HepG2 (cell line): ENCODE measurements at regions of chr2 and their contacts with region 1.

Region 1: DNA sequence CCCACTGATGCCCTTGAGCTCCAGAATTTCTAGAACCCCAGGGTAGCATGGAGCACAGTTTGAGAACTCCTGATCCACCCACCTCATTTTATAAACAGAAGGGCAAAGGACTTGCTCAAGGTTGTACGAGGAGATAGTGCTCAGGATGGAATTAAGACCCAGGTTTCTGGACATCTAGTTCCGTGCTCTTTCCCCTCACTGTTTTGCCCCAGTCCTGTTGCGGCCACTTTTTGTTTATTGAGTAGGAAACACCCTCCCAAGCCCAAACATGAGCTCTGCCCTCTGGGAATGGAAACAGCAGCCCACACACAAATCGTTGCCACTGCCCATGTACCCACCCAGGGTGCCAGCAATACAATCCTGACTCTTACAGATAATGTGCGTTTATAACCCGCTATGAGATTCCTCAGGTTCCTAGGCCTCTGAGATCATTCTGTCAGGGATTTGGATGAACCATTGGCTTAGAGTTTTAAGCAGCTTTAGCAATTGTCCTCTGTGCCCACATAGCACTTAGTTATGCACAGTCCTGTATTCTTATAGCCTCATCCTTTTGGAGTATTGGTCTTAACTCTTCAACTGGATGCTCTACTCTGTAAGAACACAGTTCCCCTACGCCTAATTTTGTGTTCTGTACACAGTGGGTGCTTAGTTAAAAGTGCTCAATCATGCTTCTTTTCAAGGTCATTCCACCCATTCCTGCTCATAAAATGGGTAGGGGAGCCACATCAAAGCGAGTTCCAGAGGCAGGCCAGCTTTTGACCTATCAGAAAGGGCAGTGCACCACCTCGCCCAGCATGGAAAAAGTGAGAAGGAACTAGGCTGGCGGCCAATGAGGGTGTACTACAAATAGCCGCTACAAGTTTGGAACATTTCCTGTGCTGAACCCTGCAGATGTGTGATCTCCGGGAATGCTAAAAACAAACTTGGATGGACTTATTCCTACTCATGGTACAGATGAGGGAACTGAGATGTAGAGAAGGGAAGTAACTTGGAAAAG is 60.3 kb upstream of the IGFBP2 start:
- DNase-seq: peak; percentile 78
- ATAC-seq: peak; percentile 66
- H3K4me3 ChIP-seq: peak overlapping the region; percentile 4 to 58 (median 7); a peak in 4 of 6 replicates
- H3K27ac ChIP-seq: peak overlapping the region; percentile 74
- H3K4me1 ChIP-seq: peaks cover 79% of the 10 kb centered on the region
- H3K27me3 ChIP-seq: no peaks in the 10 kb centered on the region; a peak in 1 of 5 replicates
- CTCF ChIP-seq: no peak
- EP300 ChIP-seq: 0 out of 4 replicates have a peak, but pooled peaks of 1 of the 2 experiments have one; percentile 62
- POLR2A ChIP-seq: peak in 1 of 2 experiments; percentile 36; a peak in 1 of 4 replicates
- RAD21 ChIP-seq: no peak

Region 2: GRCh38 chr2:216519154-216519762 is 53.6 kb before region 1 on chr2:
- CTCF ChIA-PET with region 1: interaction called, 3 read pairs
- POLR2A ChIA-PET with region 1: interaction called, 8 read pairs
- in situ Hi-C with region 1: no loop called
- intact Hi-C with region 1: loop called (anchors 2 kb)
- DNase-seq: peak; percentile 82
- ATAC-seq: peak; percentile 84
- H3K4me3 ChIP-seq: no peak overlapping the region
- H3K27ac ChIP-seq: no peak overlapping the region
- H3K4me1 ChIP-seq: peaks cover 28% of the 10 kb centered on the region
- H3K27me3 ChIP-seq: no peaks in the 10 kb centered on the region
- CTCF ChIP-seq: peak; percentile 92
- EP300 ChIP-seq: no peak
- POLR2A ChIP-seq: no peak
- RAD21 ChIP-seq: peak; percentile 93

Region 3: GRCh38 chr2:216553093-216553478 is 19.8 kb before region 1 on chr2:
- CTCF ChIA-PET with region 1: no interaction called
- POLR2A ChIA-PET with region 1: interaction called, 4 read pairs
- in situ Hi-C with region 1: no loop called
- intact Hi-C with region 1: loop called (anchors 1 kb)
- DNase-seq: peak; percentile 96
- ATAC-seq: peak; percentile 94
- H3K4me3 ChIP-seq: no peak overlapping the region
- H3K27ac ChIP-seq: peak overlapping the region; percentile 65
- H3K4me1 ChIP-seq: peaks cover 65% of the 10 kb centered on the region
- H3K27me3 ChIP-seq: no peaks in the 10 kb centered on the region
- CTCF ChIP-seq: no peak; the same call in 1 of the 2 replicates
- EP300 ChIP-seq: peak; percentile 66 to 79; a peak in 3 of 4 replicates
- POLR2A ChIP-seq: no peak
- RAD21 ChIP-seq: peak; percentile 22; the same call in 1 of the 2 replicates

Region 4: DNA sequence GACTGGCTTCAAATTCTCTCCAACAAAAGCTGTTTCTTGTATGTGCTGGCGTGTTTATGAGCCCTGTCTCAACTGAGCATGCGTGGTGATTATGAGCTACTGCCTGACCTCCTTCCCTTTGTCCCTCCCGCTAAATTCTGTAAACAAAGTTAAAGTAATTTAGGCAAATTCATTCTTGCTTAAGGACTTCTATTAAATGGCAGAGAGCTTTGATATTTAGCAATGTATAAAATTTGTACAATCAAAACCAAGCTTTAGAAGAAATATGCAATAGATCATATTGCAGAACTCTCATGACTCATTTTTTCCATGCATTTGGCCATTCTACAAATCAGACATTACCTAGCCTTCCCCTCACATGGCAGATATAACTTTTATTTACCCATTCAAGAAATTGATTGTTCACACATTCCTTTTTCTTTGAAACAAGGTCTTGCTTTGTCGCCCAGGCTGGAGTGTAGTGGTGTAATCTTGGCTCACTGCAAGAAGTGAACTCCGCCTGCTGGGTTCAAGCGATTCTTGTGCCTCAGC is 78.5 kb after region 1 on chr2:
- CTCF ChIA-PET with region 1: no interaction called
- POLR2A ChIA-PET with region 1: interaction called, 4 read pairs
- in situ Hi-C with region 1: no loop called
- intact Hi-C with region 1: loop called (anchors 5 kb)
- DNase-seq: no peak
- ATAC-seq: no peak
- H3K4me3 ChIP-seq: no peak overlapping the region
- H3K27ac ChIP-seq: no peak overlapping the region
- H3K4me1 ChIP-seq: peaks cover 56% of the 10 kb centered on the region
- H3K27me3 ChIP-seq: peaks cover 0 to under 1% of the 10 kb centered on the region in 2 experiments; a peak in 1 of 5 replicates
- CTCF ChIP-seq: no peak
- EP300 ChIP-seq: no peak
- POLR2A ChIP-seq: no peak
- RAD21 ChIP-seq: no peak

Region 5: DNA sequence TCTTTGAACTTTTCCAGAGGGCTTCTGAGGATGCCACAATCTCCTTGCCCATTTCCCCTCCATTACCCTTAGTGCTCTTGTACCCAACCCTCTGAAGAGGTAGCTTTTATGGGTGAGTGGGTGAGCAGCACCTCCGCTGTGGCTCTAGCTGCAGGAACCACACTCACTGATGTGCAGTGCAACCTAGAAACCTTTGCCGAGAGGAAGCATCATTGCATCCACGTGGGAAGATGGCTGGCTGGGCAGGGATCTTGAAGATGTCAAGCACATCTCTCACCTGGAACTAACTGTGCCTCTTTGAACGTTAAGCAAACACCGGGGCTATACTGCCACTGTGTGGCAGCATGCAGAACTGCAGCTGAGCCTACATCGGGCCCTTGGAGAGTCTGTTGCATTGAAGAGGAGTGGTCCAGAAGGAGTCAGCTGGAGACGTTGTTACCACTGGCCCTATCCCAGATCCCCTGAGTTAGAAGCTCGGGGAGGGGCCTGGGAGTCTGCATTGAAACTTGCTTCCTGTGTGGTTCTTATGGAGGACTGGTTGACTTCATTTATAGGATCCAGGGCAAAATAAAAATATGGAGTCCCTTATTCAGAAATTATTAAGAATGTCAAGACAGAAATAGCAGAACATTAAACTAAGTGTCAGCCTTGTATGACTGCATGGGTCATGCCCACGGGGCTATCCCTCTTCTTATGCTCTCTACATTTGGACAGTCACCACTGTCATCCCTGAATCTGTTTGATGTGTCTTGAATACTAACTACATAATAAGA is 93.8 kb after region 1 on chr2:
- CTCF ChIA-PET with region 1: no interaction called
- POLR2A ChIA-PET with region 1: interaction called, 3 read pairs
- in situ Hi-C with region 1: no loop called
- intact Hi-C with region 1: loop called (anchors 5 kb)
- DNase-seq: peak; percentile 64
- ATAC-seq: peak; percentile 77
- H3K4me3 ChIP-seq: no peak overlapping the region
- H3K27ac ChIP-seq: no peak overlapping the region
- H3K4me1 ChIP-seq: 0 out of 2 replicates have a peak, but pooled peaks cover 18% of the 10 kb centered on the region
- H3K27me3 ChIP-seq: peaks cover 7 to 35% of the 10 kb centered on the region in 2 experiments; a peak in 4 of 5 replicates
- CTCF ChIP-seq: peak; percentile 98
- EP300 ChIP-seq: no peak
- POLR2A ChIP-seq: no peak
- RAD21 ChIP-seq: peak; percentile 98